IMR-90 (cell line): ENCODE measurements at regions of chr15 and their contacts with region 1.

Region 1: DNA sequence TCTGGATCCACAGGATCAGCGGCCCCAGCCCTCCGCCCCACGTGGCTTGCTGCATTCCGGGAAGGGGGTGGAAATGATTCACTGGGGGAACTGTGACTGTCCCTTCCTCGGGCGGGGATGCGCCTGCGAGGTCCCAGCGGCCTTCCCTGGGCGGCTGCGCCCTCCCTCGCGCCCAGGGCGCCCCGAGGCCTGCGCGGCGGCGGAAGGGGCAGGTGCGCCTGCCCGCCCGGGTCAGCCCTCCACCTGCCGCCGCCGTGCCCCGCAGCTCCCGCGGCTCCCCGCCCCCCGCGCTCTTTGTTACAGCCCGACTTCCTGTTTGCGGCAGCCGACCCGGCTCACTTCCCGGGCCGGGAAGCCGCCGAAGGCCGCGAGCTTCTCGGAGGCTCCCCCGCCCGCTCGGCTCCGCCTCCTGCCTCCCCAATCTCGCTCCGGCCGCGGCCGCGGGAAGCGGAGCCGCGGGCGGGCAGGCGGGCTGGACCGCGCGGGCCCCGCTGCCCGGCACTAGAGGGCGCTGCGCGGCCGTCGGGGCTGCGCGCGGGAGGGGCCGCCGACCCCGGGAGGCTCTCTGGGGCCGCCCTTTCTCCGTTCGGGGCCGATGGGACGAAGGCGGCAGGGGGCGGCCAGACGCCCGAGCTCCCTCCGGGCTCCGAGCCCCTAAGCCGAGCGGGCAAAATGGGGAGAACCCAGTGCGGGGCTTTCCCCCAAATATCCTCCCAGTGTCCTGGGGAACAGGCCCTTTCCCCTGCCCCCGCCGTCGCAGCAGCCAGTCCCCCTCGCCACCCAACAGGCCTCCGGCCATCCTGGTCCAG is 11.5 kb upstream of the CHAC1 start:
- DNase-seq: peak; percentile 73
- ATAC-seq: peak; percentile 89
- H3K4me3 ChIP-seq: peak overlapping the region; percentile 30
- H3K27ac ChIP-seq: peak overlapping the region; percentile 82
- H3K4me1 ChIP-seq: peaks cover 21% of the 10 kb centered on the region
- H3K27me3 ChIP-seq: no peaks in the 10 kb centered on the region
- CTCF ChIP-seq: peak; percentile 84
- POLR2A ChIP-seq: peak; percentile 75
- RAD21 ChIP-seq: peak; percentile 77

Region 2: GRCh38 chr15:40930430-40931299 is 11.1 kb before region 1 on chr15:
- CTCF ChIA-PET with region 1: interaction called, 12 read pairs
- POLR2A ChIA-PET with region 1: no interaction called
- dilution Hi-C with region 1: no loop called
- in situ Hi-C with region 1: no loop called
- intact Hi-C with region 1: no loop called
- DNase-seq: peak; percentile 51
- ATAC-seq: peak; percentile 21
- H3K4me3 ChIP-seq: peak overlapping the region; percentile 85
- H3K27ac ChIP-seq: no peak overlapping the region; the same call in 1 of the 2 replicates
- H3K4me1 ChIP-seq: peaks cover 21% of the 10 kb centered on the region
- H3K27me3 ChIP-seq: peaks cover 23% of the 10 kb centered on the region
- CTCF ChIP-seq: peak; percentile 43
- POLR2A ChIP-seq: no peak
- RAD21 ChIP-seq: no peak

Region 3: GRCh38 chr15:40952901-40953712 is 11.4 kb after region 1 on chr15 and contains the start of gene CHAC1:
- CTCF ChIA-PET with region 1: interaction called, 23 read pairs
- POLR2A ChIA-PET with region 1: interaction called, 6 read pairs
- dilution Hi-C with region 1: no loop called
- in situ Hi-C with region 1: no loop called
- intact Hi-C with region 1: no loop called
- DNase-seq: peak; percentile 96
- ATAC-seq: peak; percentile 91
- H3K4me3 ChIP-seq: peak within 1 kb of the TSS; percentile 70
- H3K27ac ChIP-seq: peak within 1 kb of the TSS; percentile 96
- H3K4me1 ChIP-seq: peaks cover 31% of the 10 kb centered on the region
- H3K27me3 ChIP-seq: no peaks in the 10 kb centered on the region
- CTCF ChIP-seq: no peak
- POLR2A ChIP-seq: peak; percentile 97
- RAD21 ChIP-seq: peak; percentile 10
- total RNA-seq, gene CHAC1: 41.9 and 51.3 TPM in 2 replicates

Region 4: DNA sequence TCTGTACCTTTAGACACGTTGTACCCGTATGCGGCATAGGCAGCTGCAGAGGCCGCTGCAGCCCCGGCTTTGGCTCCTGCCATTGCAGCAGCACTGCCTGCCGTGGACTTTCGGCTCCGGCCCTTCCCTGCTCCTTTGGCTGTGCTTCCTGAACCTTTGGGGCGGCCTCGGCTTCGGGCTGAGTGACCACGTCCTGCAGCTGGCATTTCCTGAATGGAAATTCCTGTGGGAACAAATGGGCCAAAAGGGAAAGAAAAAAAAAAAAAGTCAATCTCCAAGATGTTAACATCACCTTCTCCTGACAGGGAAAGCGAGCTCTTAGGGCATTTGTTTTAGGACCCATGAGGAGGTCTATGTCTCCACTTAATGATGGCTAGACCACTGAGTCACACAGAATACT is 41.1 kb after region 1 on chr15:
- CTCF ChIA-PET with region 1: interaction called, 16 read pairs
- POLR2A ChIA-PET with region 1: no interaction called
- dilution Hi-C with region 1: no loop called
- in situ Hi-C with region 1: no loop called
- intact Hi-C with region 1: no loop called
- DNase-seq: peak; percentile 93
- ATAC-seq: peak; percentile 66
- H3K4me3 ChIP-seq: no peak overlapping the region
- H3K27ac ChIP-seq: peak overlapping the region; percentile 94
- H3K4me1 ChIP-seq: peaks cover 31% of the 10 kb centered on the region
- H3K27me3 ChIP-seq: no peaks in the 10 kb centered on the region
- CTCF ChIP-seq: 0 out of 2 replicates have a peak, but pooled peaks have one; percentile 3
- POLR2A ChIP-seq: no peak
- RAD21 ChIP-seq: peak; percentile 15

Region 5: GRCh38 chr15:41022487-41023090 is 80.9 kb after region 1 on chr15:
- CTCF ChIA-PET with region 1: interaction called, 39 read pairs
- POLR2A ChIA-PET with region 1: interaction called, 4 read pairs
- dilution Hi-C with region 1: no loop called
- in situ Hi-C with region 1: loop called (anchors 5 kb)
- intact Hi-C with region 1: loop called (anchors 5 kb)
- DNase-seq: peak; percentile 75
- ATAC-seq: peak; percentile 69
- H3K4me3 ChIP-seq: no peak overlapping the region
- H3K27ac ChIP-seq: no peak overlapping the region
- H3K4me1 ChIP-seq: peaks cover 14% of the 10 kb centered on the region
- H3K27me3 ChIP-seq: no peaks in the 10 kb centered on the region
- CTCF ChIP-seq: peak; percentile 90
- POLR2A ChIP-seq: peak; percentile 43; the same call in 1 of the 2 replicates
- RAD21 ChIP-seq: peak; percentile 93